IMR-90 (cell line): ENCODE measurements at regions of chr12 and their contacts with region 1.

Region 1: DNA sequence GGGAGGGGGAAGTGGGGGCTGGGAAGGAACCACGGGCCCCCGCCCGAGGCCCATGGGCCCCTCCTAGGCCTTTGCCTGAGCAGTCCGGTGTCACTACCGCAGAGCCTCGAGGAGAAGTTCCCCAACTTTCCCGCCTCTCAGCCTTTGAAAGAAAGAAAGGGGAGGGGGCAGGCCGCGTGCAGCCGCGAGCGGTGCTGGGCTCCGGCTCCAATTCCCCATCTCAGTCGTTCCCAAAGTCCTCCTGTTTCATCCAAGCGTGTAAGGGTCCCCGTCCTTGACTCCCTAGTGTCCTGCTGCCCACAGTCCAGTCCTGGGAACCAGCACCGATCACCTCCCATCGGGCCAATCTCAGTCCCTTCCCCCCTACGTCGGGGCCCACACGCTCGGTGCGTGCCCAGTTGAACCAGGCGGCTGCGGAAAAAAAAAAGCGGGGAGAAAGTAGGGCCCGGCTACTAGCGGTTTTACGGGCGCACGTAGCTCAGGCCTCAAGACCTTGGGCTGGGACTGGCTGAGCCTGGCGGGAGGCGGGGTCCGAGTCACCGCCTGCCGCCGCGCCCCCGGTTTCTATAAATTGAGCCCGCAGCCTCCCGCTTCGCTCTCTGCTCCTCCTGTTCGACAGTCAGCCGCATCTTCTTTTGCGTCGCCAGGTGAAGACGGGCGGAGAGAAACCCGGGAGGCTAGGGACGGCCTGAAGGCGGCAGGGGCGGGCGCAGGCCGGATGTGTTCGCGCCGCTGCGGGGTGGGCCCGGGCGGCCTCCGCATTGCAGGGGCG is at the start of gene GAPDH:
- DNase-seq: peak; percentile 97
- ATAC-seq: peak; percentile 51
- H3K4me3 ChIP-seq: peak within 1 kb of the TSS; percentile 66
- H3K27ac ChIP-seq: peak within 1 kb of the TSS; percentile 94
- H3K4me1 ChIP-seq: peaks cover 12% of the 10 kb centered on the region
- H3K27me3 ChIP-seq: no peaks in the 10 kb centered on the region
- CTCF ChIP-seq: 0 out of 2 replicates have a peak, but pooled peaks have one; percentile 3
- POLR2A ChIP-seq: peak; percentile 100
- RAD21 ChIP-seq: no peak
- total RNA-seq, gene GAPDH: 11,536 and 12,939 TPM in 2 replicates

Region 2: GRCh38 chr12:5988659-5989116 is 545.4 kb before region 1 on chr12:
- CTCF ChIA-PET with region 1: no interaction called
- POLR2A ChIA-PET with region 1: interaction called, 15 read pairs
- dilution Hi-C with region 1: no loop called
- in situ Hi-C with region 1: no loop called
- intact Hi-C with region 1: no loop called
- DNase-seq: peak; percentile 71
- ATAC-seq: peak; percentile 100
- H3K4me3 ChIP-seq: no peak overlapping the region
- H3K27ac ChIP-seq: no peak overlapping the region
- H3K4me1 ChIP-seq: no peaks in the 10 kb centered on the region
- H3K27me3 ChIP-seq: peaks cover 13% of the 10 kb centered on the region
- CTCF ChIP-seq: peak; percentile 98
- POLR2A ChIP-seq: no peak; the same call in 1 of the 2 replicates
- RAD21 ChIP-seq: peak; percentile 99

Region 3: GRCh38 chr12:6341417-6342139 is 192.5 kb before region 1 on chr12 and contains the start of gene TNFRSF1A:
- CTCF ChIA-PET with region 1: interaction called, 3 read pairs
- POLR2A ChIA-PET with region 1: interaction called, 11 read pairs
- dilution Hi-C with region 1: no loop called
- in situ Hi-C with region 1: no loop called
- intact Hi-C with region 1: loop called (anchors 2 kb)
- DNase-seq: peak; percentile 85
- ATAC-seq: peak; percentile 61
- H3K4me3 ChIP-seq: peak within 1 kb of the TSS; percentile 86
- H3K27ac ChIP-seq: peak within 1 kb of the TSS; percentile 98
- H3K4me1 ChIP-seq: peaks cover 46% of the 10 kb centered on the region
- H3K27me3 ChIP-seq: no peaks in the 10 kb centered on the region
- CTCF ChIP-seq: no peak
- POLR2A ChIP-seq: no peak; the same call in 1 of the 2 replicates
- RAD21 ChIP-seq: peak; percentile 17; the same call in 1 of the 2 replicates
- total RNA-seq, gene TNFRSF1A: 79.6 and 86.7 TPM in 2 replicates

Region 4: DNA sequence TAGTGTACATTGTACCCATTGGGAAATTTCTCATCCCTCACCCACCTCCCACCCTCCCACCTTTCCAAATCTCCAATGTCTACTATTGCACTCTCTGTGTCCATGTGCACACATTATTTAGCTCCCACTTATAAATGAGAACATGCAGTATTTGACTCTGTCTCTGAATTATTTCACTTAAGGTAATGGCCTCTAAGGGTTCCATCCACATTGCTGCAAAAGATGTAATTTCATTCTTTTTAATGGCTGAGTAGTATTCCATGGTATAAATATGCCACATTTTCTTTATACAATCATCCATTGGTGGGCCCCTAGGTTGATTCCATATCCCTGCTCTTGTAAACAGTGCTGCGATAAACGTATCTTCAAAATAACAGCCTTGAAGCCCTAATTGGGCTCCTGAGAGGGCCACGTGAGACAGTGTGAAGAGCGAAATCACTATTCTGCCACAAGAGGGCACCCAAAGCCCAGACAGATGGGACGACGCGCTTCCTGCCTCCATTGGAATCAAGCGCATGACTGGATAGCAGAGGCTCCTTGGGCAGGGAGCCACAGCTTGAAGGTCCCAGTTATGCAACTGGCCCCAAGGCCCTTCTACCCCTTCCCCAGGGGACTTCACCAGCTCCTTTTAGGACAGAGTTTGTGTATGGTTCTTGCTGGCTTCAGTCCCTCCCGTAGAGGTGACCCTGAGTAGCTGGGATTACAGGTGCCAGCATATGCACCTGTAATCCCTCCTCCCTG is 110.7 kb before region 1 on chr12:
- CTCF ChIA-PET with region 1: no interaction called
- POLR2A ChIA-PET with region 1: interaction called, 4 read pairs
- dilution Hi-C with region 1: no loop called
- in situ Hi-C with region 1: no loop called
- intact Hi-C with region 1: loop called (anchors 1 kb)
- DNase-seq: peak; percentile 90
- ATAC-seq: peak; percentile 99
- H3K4me3 ChIP-seq: no peak overlapping the region
- H3K27ac ChIP-seq: no peak overlapping the region
- H3K4me1 ChIP-seq: no peaks in the 10 kb centered on the region
- H3K27me3 ChIP-seq: no peaks in the 10 kb centered on the region
- CTCF ChIP-seq: peak; percentile 96
- POLR2A ChIP-seq: peak; percentile 54; the same call in 1 of the 2 replicates
- RAD21 ChIP-seq: peak; percentile 97

Region 5: DNA sequence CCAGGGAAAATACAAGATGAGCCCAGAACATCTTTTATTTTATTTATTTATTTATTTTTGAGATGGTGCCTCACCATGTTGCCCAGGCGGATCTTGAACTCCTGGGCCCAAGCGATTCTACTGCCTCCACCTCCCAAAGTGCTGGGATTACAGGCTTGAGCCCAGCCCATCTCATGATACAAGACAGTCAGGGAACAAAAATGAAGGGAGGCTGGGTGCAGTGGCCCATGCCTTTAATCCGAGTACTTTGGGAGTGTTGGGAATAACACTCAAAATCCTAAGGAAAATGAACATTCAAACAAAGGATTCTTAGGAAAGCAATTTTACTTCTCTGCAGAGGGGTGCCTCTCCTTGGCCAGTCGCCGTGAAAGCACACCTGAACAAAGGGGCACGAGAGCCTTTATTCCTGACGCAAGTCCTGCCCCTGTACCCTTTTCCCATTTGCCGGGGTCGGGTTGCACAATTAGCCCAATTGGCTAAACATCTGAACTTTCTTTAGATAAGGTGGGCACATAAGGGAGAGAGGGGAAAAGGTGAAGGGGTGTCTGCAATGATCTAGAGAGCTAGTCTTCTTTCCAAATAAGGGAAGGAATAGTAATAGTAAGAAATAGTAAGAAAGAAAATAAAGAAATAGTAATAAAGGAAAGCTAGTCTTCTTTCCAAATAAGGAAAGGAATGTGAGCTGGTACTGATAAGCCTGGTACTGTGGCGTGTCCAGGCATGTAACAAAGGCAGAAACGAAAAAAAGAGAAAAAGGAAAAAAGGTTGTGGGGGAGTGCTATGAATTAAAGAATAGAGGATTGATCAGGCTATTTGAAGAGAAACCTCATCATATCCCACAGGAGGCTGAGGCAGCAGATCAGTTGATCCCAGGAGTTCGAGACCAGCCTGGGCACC is 26.8 kb before region 1 on chr12:
- CTCF ChIA-PET with region 1: no interaction called
- POLR2A ChIA-PET with region 1: interaction called, 15 read pairs
- dilution Hi-C with region 1: no loop called
- in situ Hi-C with region 1: no loop called
- intact Hi-C with region 1: no loop called
- DNase-seq: peak; percentile 42
- ATAC-seq: peak; percentile 86
- H3K4me3 ChIP-seq: no peak overlapping the region
- H3K27ac ChIP-seq: peak overlapping the region; percentile 93
- H3K4me1 ChIP-seq: peaks cover 10% of the 10 kb centered on the region
- H3K27me3 ChIP-seq: no peaks in the 10 kb centered on the region
- CTCF ChIP-seq: no peak
- POLR2A ChIP-seq: no peak
- RAD21 ChIP-seq: no peak

Region 6: DNA sequence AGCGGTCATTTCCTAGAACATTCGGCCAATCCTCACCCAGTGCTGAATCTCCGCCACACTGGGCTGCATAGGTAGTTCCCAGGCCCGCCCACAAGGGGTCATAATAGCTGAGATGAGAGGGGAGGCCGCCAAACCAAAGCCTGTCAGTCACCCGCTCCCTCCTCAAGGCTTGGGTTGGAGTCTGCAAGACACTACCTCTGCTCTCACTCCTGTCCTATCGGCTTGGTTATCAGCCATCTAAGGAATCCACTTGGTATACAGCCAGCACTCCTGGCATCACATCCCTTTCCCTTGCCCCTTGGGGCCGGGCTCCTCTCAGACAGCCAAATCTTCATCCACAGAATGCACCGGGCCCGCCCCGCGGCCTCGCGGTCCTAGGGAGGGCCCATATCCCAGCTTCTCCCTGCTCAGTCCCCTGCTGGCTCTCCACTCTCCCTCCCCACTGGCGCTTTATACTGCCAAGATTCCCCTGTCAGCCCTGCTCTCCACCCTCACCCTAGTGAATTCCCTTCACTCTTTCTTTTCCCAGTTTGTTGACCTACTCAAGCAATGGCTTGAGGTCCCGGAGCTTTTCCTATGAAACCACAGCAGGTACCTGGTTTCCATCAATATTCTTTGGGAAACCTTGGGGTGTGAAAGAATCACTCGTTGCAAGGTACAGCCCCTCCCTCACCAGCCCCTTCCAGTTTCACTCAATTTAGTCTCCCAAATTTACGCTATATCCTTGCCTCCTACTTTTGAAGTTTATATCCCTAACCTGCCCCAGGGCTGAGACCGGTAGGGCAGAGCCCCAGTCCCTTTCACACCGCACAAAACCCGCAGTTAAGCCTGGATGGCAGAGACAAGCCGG is 20.3 kb after region 1 on chr12:
- CTCF ChIA-PET with region 1: interaction called, 8 read pairs
- POLR2A ChIA-PET with region 1: interaction called, 48 read pairs
- dilution Hi-C with region 1: no loop called
- in situ Hi-C with region 1: no loop called
- intact Hi-C with region 1: no loop called
- DNase-seq: peak; percentile 72
- ATAC-seq: peak; percentile 40
- H3K4me3 ChIP-seq: peak overlapping the region; percentile 82
- H3K27ac ChIP-seq: peak overlapping the region; percentile 46
- H3K4me1 ChIP-seq: peaks cover 40% of the 10 kb centered on the region
- H3K27me3 ChIP-seq: no peaks in the 10 kb centered on the region
- CTCF ChIP-seq: peak; percentile 60
- POLR2A ChIP-seq: no peak
- RAD21 ChIP-seq: peak; percentile 43